IMR-90 (cell line): ENCODE measurements at regions of chr6 and their contacts with region 1.

Region 1: GRCh38 chr6:109382576-109383437 is 540 bp upstream of the CD164 start:
- DNase-seq: peak; percentile 92
- ATAC-seq: peak; percentile 81
- H3K4me3 ChIP-seq: peak overlapping the region; percentile 64
- H3K27ac ChIP-seq: peak overlapping the region; percentile 98
- H3K4me1 ChIP-seq: no peaks in the 10 kb centered on the region
- H3K27me3 ChIP-seq: peaks cover 6% of the 10 kb centered on the region
- CTCF ChIP-seq: peak; percentile 52
- POLR2A ChIP-seq: peak; percentile 47; the same call in 1 of the 2 replicates
- RAD21 ChIP-seq: peak; percentile 43

Region 2: GRCh38 chr6:108896111-108896661 is 486.6 kb before region 1 on chr6:
- CTCF ChIA-PET with region 1: no interaction called
- POLR2A ChIA-PET with region 1: no interaction called
- dilution Hi-C with region 1: no loop called
- in situ Hi-C with region 1: no loop called
- intact Hi-C with region 1: loop called (anchors 10 kb)
- DNase-seq: peak; percentile 92
- ATAC-seq: peak; percentile 83
- H3K4me3 ChIP-seq: no peak overlapping the region
- H3K27ac ChIP-seq: peak overlapping the region; percentile 98
- H3K4me1 ChIP-seq: peaks cover 13% of the 10 kb centered on the region
- H3K27me3 ChIP-seq: no peaks in the 10 kb centered on the region
- CTCF ChIP-seq: no peak
- POLR2A ChIP-seq: no peak
- RAD21 ChIP-seq: no peak

Region 3: DNA sequence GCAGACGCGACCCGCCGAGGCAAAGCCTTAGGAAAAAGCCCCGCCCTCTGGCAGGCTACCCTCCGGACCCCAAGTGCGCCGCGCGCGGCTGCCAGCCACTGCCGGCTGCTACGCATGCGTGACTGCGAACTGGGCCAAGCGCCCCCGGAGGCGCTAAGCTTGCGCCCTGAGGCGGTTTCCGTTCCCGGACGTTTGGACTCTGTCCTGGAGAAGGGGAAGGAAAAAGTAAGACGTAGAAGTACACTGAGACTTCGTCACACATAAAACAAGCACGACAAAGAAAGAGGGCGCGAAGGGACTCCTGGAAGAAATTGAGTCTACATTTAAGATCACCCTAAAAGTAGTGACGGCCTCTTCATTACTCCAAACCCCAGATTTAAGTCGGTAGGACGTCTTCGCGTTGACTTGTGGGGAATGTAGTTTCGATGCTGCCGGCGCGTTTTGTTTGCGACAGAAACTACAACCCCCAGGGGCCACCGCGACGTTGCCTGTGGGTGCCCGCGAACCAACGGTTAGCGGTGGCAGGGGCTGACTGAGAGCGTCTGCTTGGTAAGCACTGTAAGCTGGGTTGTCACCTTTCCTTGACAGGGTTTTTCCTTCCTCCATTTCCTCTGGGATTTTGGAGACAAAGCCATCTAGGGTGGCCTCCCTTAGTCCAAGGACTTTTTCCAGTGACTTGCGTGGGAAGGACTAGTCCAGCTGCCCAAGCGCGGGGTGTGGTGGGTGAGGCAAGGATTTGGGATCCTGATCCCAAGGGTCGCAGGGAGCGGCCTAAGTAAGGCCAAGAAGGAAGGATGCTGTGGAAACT is 287.6 kb before region 1 on chr6 and contains the start of gene CEP57L1:
- CTCF ChIA-PET with region 1: no interaction called
- POLR2A ChIA-PET with region 1: no interaction called
- dilution Hi-C with region 1: no loop called
- in situ Hi-C with region 1: no loop called
- intact Hi-C with region 1: loop called (anchors 1 kb)
- DNase-seq: peak; percentile 97
- ATAC-seq: peak; percentile 68
- H3K4me3 ChIP-seq: peak within 1 kb of the TSS; percentile 76
- H3K27ac ChIP-seq: peak within 1 kb of the TSS; percentile 89
- H3K4me1 ChIP-seq: peaks cover 3% of the 10 kb centered on the region; the same call in 1 of the 2 replicates
- H3K27me3 ChIP-seq: no peaks in the 10 kb centered on the region
- CTCF ChIP-seq: 0 out of 2 replicates have a peak, but pooled peaks have one; percentile 25
- POLR2A ChIP-seq: peak; percentile 90
- RAD21 ChIP-seq: 0 out of 2 replicates have a peak, but pooled peaks have one; percentile 1
- total RNA-seq, gene CEP57L1: 21.9 and 28.3 TPM in 2 replicates

Region 4: DNA sequence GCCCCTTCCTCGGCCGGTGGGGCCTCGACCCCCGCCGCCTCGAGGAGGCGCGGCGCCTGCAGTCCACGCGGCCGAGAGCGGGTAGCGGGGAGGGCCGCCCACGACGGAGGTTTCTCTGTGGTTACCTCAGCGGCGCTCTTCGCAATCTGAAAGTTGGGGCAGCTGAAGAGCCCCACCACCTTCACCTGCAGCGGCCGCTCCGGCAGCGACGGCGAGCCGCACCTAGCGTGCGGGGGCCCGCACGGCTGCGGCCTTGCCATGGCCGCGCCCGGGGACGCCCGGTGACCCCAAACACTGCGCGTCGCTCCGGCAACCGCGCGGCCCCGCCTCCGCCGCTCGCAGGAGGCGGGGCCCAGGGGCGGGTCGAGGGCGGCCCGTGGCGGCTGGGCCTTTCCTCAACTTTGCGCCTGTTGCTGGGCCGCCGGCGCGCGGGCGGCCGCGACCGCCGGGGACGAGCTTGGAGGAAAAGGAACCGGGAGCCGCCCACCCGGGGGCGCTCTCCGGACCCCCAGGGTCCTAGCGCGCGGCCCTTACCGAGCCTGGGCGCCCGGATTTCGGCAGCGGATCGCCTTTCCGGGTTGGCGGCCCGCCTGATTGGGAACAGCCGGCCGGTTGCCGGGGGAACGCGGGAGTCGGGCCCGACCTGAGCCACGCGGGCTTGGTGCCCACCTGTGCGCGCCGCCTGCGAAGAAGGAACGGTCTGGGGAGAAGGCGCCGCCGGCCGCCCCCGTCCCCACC is 57.7 kb after region 1 on chr6 and contains the starts of genes PPIL6 and SMPD2:
- CTCF ChIA-PET with region 1: no interaction called
- POLR2A ChIA-PET with region 1: no interaction called
- dilution Hi-C with region 1: no loop called
- in situ Hi-C with region 1: no loop called
- intact Hi-C with region 1: loop called (anchors 1 kb)
- DNase-seq: peak; percentile 87
- ATAC-seq: peak; percentile 90
- H3K4me3 ChIP-seq: peak within 1 kb of the TSS; percentile 70
- H3K27ac ChIP-seq: peak within 1 kb of the TSS; percentile 48
- H3K4me1 ChIP-seq: peaks cover 8% of the 10 kb centered on the region
- H3K27me3 ChIP-seq: no peaks in the 10 kb centered on the region
- CTCF ChIP-seq: peak; percentile 46
- POLR2A ChIP-seq: peak; percentile 61
- RAD21 ChIP-seq: no peak
- total RNA-seq, gene PPIL6: 0.18 and 1.4 TPM in 2 replicates
- total RNA-seq, gene SMPD2: 8.3 and 9.0 TPM in 2 replicates

Region 5: DNA sequence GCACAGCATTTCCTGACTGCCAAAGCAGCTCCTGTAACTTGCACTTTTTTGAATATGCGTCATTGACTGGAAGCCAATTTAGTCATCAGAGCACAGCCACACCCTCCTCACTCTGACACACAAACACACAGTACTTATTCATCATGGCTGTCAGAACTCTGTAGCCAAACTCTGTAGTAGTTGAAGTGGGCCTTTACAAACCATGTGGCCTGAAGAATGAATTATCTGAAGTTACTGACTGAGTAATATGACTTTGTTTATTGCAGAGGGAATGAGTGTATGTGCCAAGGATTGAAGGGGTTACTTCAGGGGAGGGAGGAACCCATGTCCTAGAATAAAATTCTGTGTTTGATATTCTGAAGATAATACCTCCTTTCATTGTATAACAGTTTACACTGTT is 411.0 kb after region 1 on chr6:
- CTCF ChIA-PET with region 1: no interaction called
- POLR2A ChIA-PET with region 1: no interaction called
- dilution Hi-C with region 1: no loop called
- in situ Hi-C with region 1: no loop called
- intact Hi-C with region 1: no loop called
- DNase-seq: peak; percentile 98
- ATAC-seq: peak; percentile 84
- H3K4me3 ChIP-seq: no peak overlapping the region
- H3K27ac ChIP-seq: no peak overlapping the region
- H3K4me1 ChIP-seq: peaks cover 15% of the 10 kb centered on the region
- H3K27me3 ChIP-seq: no peaks in the 10 kb centered on the region
- CTCF ChIP-seq: no peak
- POLR2A ChIP-seq: no peak
- RAD21 ChIP-seq: no peak